GM12878 (cell line): ENCODE measurements at regions of chr7 and their contacts with region 1.

Region 1: DNA sequence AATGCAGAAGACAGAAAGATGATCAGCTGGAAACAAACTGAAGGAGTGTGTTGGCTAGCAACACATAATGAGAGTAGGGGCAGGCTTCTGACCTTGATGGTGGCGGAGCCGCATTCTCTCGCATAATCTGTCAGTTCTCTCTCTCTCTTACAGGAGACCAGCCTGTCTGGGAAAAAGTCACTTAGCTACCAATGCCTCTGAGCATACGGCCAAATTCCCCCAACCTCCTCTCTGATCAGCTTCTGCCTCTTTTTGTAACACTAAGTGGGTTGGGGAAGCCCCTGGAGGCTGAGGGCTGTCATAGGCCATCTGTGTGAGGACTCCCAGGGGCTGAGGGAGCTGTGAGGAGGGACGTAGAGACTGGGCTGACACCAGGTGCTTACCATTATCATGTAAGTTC is 104.6 kb downstream of the HIPK2 start:
- DNase-seq: peak; percentile 90
- ATAC-seq: peak; percentile 93
- H3K4me3 ChIP-seq: peak overlapping the region; percentile 17; the same call in 1 of the 2 replicates
- H3K27ac ChIP-seq: peak overlapping the region; percentile 85
- H3K4me1 ChIP-seq: peaks cover 33% of the 10 kb centered on the region
- H3K27me3 ChIP-seq: no peaks in the 10 kb centered on the region
- CTCF ChIP-seq: 0 out of 6 replicates have a peak, but pooled peaks of 1 of the 3 experiments have one; percentile 3
- EP300 ChIP-seq: peak in 1 of 2 experiments; percentile 56; a peak in 2 of 4 replicates
- POLR2A ChIP-seq: no peak
- RAD21 ChIP-seq: peak; percentile 32; the same call in 1 of the 2 replicates

Region 2: GRCh38 chr7:139610595-139610994 is 62.6 kb before region 1 on chr7:
- CTCF ChIA-PET with region 1: no interaction called
- POLR2A ChIA-PET with region 1: no interaction called
- RAD21 ChIA-PET with region 1: no interaction called
- SMC1A ChIA-PET with region 1: no interaction called
- in situ Hi-C with region 1: no loop called
- intact Hi-C with region 1: no loop called
- DNase-seq: no peak
- ATAC-seq: no peak
- H3K4me3 ChIP-seq: no peak overlapping the region
- H3K27ac ChIP-seq: no peak overlapping the region
- H3K4me1 ChIP-seq: no peaks in the 10 kb centered on the region
- H3K27me3 ChIP-seq: no peaks in the 10 kb centered on the region
- CTCF ChIP-seq: no peak
- EP300 ChIP-seq: no peak
- POLR2A ChIP-seq: no peak
- RAD21 ChIP-seq: no peak

Region 3: DNA sequence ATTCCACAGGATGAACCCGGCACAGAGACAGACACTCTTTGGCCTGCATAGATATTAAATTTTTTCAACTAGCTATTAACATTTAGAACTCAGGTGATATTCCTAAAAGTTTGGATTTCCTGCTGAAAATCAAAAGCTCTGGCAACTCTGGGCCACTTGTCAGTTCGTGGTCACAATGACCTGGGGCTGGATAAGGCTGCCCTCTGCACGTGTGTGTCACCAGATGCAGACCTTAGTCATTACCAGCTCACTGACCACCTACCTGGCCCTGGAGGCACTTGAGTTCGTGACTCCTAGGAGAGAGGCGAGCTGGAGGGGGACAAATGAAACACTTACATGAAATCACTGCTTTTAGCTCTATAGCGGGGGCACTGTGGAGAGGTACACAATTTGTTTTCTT is 21.9 kb before region 1 on chr7:
- CTCF ChIA-PET with region 1: interaction called, 85 read pairs
- POLR2A ChIA-PET with region 1: interaction called, 32 read pairs
- RAD21 ChIA-PET with region 1: interaction called, 95 read pairs
- SMC1A ChIA-PET with region 1: interaction called, 77 read pairs
- in situ Hi-C with region 1: no loop called
- intact Hi-C with region 1: loop called (anchors 1 kb)
- DNase-seq: no peak
- ATAC-seq: no peak
- H3K4me3 ChIP-seq: no peak overlapping the region
- H3K27ac ChIP-seq: no peak overlapping the region
- H3K4me1 ChIP-seq: peaks cover 43% of the 10 kb centered on the region
- H3K27me3 ChIP-seq: no peaks in the 10 kb centered on the region
- CTCF ChIP-seq: no peak
- EP300 ChIP-seq: no peak
- POLR2A ChIP-seq: no peak
- RAD21 ChIP-seq: no peak

Region 4: GRCh38 chr7:139660317-139661042 is 12.8 kb before region 1 on chr7:
- CTCF ChIA-PET with region 1: interaction called, 7 read pairs
- POLR2A ChIA-PET with region 1: interaction called, 3 read pairs
- RAD21 ChIA-PET with region 1: interaction called, 3 read pairs
- SMC1A ChIA-PET with region 1: interaction called, 30 read pairs
- in situ Hi-C with region 1: no loop called
- intact Hi-C with region 1: no loop called
- DNase-seq: no peak
- ATAC-seq: no peak
- H3K4me3 ChIP-seq: no peak overlapping the region
- H3K27ac ChIP-seq: no peak overlapping the region
- H3K4me1 ChIP-seq: no peaks in the 10 kb centered on the region
- H3K27me3 ChIP-seq: no peaks in the 10 kb centered on the region
- CTCF ChIP-seq: no peak
- EP300 ChIP-seq: no peak
- POLR2A ChIP-seq: no peak
- RAD21 ChIP-seq: no peak

Region 5: GRCh38 chr7:139708541-139708940 is 35.3 kb after region 1 on chr7:
- CTCF ChIA-PET with region 1: interaction called, 3 read pairs
- POLR2A ChIA-PET with region 1: interaction called, 5 read pairs
- RAD21 ChIA-PET with region 1: interaction called, 18 read pairs
- SMC1A ChIA-PET with region 1: interaction called, 13 read pairs
- in situ Hi-C with region 1: no loop called
- intact Hi-C with region 1: no loop called
- DNase-seq: peak; percentile 58
- ATAC-seq: peak; percentile 75
- H3K4me3 ChIP-seq: no peak overlapping the region
- H3K27ac ChIP-seq: no peak overlapping the region
- H3K4me1 ChIP-seq: peaks cover 18% of the 10 kb centered on the region
- H3K27me3 ChIP-seq: no peaks in the 10 kb centered on the region
- CTCF ChIP-seq: no peak
- EP300 ChIP-seq: no peak
- POLR2A ChIP-seq: no peak
- RAD21 ChIP-seq: peak; percentile 30; the same call in 1 of the 2 replicates

Region 6: DNA sequence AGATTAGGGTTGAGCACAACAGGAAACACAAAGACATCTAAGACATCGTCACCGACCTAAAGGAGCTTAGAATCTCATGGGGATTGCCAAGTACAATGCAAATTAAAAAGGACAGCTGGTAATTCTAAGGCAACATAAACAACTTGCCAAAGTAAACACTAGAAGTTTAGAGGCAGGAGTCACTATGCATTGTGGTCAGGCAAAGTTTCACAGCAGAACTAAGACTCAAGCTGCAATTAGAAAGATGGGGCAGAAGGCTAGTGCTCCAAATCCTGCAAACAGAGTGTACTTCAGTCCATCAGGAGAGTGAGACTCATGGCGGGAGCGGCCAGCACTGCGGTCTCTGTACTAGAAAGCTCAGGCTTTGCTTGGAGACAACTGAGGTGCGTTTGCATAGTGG is 51.8 kb after region 1 on chr7:
- CTCF ChIA-PET with region 1: no interaction called
- POLR2A ChIA-PET with region 1: interaction called, 5 read pairs
- RAD21 ChIA-PET with region 1: interaction called, 14 read pairs
- SMC1A ChIA-PET with region 1: interaction called, 8 read pairs
- in situ Hi-C with region 1: no loop called
- intact Hi-C with region 1: no loop called
- DNase-seq: peak; percentile 59
- ATAC-seq: peak; percentile 83
- H3K4me3 ChIP-seq: no peak overlapping the region
- H3K27ac ChIP-seq: peak overlapping the region; percentile 39
- H3K4me1 ChIP-seq: peaks cover 25% of the 10 kb centered on the region
- H3K27me3 ChIP-seq: no peaks in the 10 kb centered on the region
- CTCF ChIP-seq: no peak
- EP300 ChIP-seq: peak; percentile 52 to 69; a peak in 3 of 4 replicates
- POLR2A ChIP-seq: no peak
- RAD21 ChIP-seq: no peak

Region 7: DNA sequence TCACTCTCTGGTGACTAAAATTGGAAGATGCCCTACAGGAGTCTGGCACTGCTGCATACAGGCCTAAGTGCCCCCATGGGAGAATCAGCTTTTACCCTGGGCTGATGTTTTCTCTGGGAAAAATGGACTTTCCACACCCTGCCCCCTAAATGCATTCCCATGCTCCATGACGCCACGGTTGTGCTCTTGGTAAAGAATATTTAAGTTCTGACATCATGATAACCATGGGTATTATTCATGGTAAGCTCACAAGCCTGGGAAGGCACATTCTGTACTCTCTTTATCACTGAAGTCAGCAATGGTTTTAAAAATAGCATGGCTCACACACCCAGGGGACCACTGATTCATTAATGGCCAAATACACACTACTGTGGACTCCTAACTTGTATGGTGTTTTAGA is 61.2 kb after region 1 on chr7:
- CTCF ChIA-PET with region 1: no interaction called
- POLR2A ChIA-PET with region 1: no interaction called
- RAD21 ChIA-PET with region 1: interaction called, 3 read pairs
- SMC1A ChIA-PET with region 1: interaction called, 4 read pairs
- in situ Hi-C with region 1: no loop called
- intact Hi-C with region 1: loop called (anchors 2 kb)
- DNase-seq: no peak
- ATAC-seq: no peak
- H3K4me3 ChIP-seq: no peak overlapping the region
- H3K27ac ChIP-seq: no peak overlapping the region
- H3K4me1 ChIP-seq: peaks cover 8% of the 10 kb centered on the region
- H3K27me3 ChIP-seq: no peaks in the 10 kb centered on the region
- CTCF ChIP-seq: no peak
- EP300 ChIP-seq: no peak
- POLR2A ChIP-seq: no peak
- RAD21 ChIP-seq: no peak

Region 8: GRCh38 chr7:139767561-139767982 is 94.3 kb after region 1 on chr7:
- CTCF ChIA-PET with region 1: interaction called, 3 read pairs
- POLR2A ChIA-PET with region 1: interaction called, 3 read pairs
- RAD21 ChIA-PET with region 1: interaction called, 22 read pairs
- SMC1A ChIA-PET with region 1: interaction called, 8 read pairs
- in situ Hi-C with region 1: no loop called
- intact Hi-C with region 1: no loop called
- DNase-seq: peak; percentile 48
- ATAC-seq: peak; percentile 79
- H3K4me3 ChIP-seq: no peak overlapping the region
- H3K27ac ChIP-seq: peak overlapping the region; percentile 35; the same call in 1 of the 2 replicates
- H3K4me1 ChIP-seq: peaks cover 31% of the 10 kb centered on the region
- H3K27me3 ChIP-seq: no peaks in the 10 kb centered on the region
- CTCF ChIP-seq: no peak
- EP300 ChIP-seq: no peak
- POLR2A ChIP-seq: no peak
- RAD21 ChIP-seq: no peak